K562 (cell line): ENCODE measurements at regions of chr6 and their contacts with region 1.

Region 1: GRCh38 chr6:38713812-38714211 is 1.3 kb upstream of the DNAH8 start:
- DNase-seq: no peak
- ATAC-seq: peak; percentile 43
- H3K4me3 ChIP-seq: no peak overlapping the region
- H3K27ac ChIP-seq: no peak overlapping the region
- H3K4me1 ChIP-seq: peaks cover 3 to 5% of the 10 kb centered on the region in 2 experiments; a peak in 3 of 5 replicates
- H3K27me3 ChIP-seq: peaks cover 2 to 14% of the 10 kb centered on the region in 2 experiments; a peak in 4 of 5 replicates
- CTCF ChIP-seq: no peak
- EP300 ChIP-seq: no peak
- POLR2A ChIP-seq: no peak
- RAD21 ChIP-seq: no peak

Region 2: DNA sequence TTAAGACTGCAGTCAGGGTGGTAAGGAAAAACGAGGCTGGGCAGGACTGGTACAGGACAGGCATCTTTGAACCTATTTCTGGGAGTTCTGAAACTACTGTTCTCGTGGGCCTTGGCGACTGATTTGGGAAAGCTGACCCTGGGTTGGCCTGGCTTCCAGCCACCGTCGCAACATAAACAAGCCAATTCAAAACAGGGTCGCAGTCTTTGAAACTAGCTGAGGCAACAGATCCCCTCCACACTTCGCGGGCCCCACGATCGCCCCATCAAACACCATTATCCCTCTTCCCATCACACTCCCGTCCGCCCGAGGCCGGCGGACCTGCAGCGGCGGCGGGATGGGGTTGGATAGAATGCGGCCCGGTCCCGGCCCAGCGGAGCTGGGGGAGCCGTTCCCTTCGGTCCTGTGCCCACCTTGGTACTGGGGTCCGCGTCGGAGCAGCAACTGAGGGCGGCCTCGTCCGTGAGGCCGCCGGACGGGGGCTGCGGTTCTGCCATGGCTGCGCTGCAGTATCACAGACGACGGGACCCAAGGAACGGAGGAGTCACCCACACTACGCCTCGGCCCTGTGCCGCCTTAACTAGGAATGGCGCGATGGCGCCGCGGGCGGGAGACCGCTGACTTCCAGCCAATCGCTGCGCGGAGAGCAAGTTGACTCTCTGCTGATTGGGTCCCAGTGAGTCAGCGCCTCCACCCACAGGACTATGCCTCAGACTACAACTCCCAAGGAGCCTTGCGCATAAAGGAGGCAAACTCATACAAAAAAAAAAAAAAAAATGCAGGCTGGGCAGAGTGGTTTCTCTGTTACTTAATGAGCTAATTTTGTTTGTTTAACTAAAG is 11.0 kb before region 1 on chr6 and contains the start of gene GLO1:
- CTCF ChIA-PET with region 1: no interaction called
- POLR2A ChIA-PET with region 1: interaction called, 24 read pairs
- in situ Hi-C with region 1: no loop called
- intact Hi-C with region 1: no loop called
- DNase-seq: peak; percentile 100
- ATAC-seq: peak; percentile 100
- H3K4me3 ChIP-seq: peak within 1 kb of the TSS; percentile 70
- H3K27ac ChIP-seq: peak within 1 kb of the TSS; percentile 84
- H3K4me1 ChIP-seq: peaks cover 13 to 16% of the 10 kb centered on the region in 2 experiments
- H3K27me3 ChIP-seq: no peaks in the 10 kb centered on the region; a peak in 1 of 5 replicates
- CTCF ChIP-seq: no peak
- EP300 ChIP-seq: no peak
- POLR2A ChIP-seq: peak; percentile 97
- RAD21 ChIP-seq: no peak
- polyA plus RNA-seq, gene GLO1: 155 to 203 TPM

Region 3: GRCh38 chr6:38725414-38726183 is 11.8 kb after region 1 on chr6:
- CTCF ChIA-PET with region 1: no interaction called
- POLR2A ChIA-PET with region 1: interaction called, 12 read pairs
- in situ Hi-C with region 1: no loop called
- intact Hi-C with region 1: no loop called
- DNase-seq: peak in 1 of 4 experiments; percentile 46
- ATAC-seq: no peak
- H3K4me3 ChIP-seq: no peak overlapping the region
- H3K27ac ChIP-seq: no peak overlapping the region
- H3K4me1 ChIP-seq: peaks cover 0 to 8% of the 10 kb centered on the region in 2 experiments; a peak in 2 of 5 replicates
- H3K27me3 ChIP-seq: no peaks in the 10 kb centered on the region
- CTCF ChIP-seq: no peak
- EP300 ChIP-seq: no peak
- POLR2A ChIP-seq: no peak
- RAD21 ChIP-seq: no peak